ENCODE measurements at regions of chr1 and their contacts with region 1.

Region 1: GRCh38 chr1:234881893-234882771 is 246.5 kb downstream of the TOMM20 start:
- DNase-seq: peak; percentile 40
- H3K4me3 Mint-ChIP-seq: no peak overlapping the region
- H3K27ac Mint-ChIP-seq: peak overlapping the region; percentile 33
- H3K4me1 Mint-ChIP-seq: peaks cover 37% of the 10 kb centered on the region
- H3K27me3 Mint-ChIP-seq: no peaks in the 10 kb centered on the region

Region 2: DNA sequence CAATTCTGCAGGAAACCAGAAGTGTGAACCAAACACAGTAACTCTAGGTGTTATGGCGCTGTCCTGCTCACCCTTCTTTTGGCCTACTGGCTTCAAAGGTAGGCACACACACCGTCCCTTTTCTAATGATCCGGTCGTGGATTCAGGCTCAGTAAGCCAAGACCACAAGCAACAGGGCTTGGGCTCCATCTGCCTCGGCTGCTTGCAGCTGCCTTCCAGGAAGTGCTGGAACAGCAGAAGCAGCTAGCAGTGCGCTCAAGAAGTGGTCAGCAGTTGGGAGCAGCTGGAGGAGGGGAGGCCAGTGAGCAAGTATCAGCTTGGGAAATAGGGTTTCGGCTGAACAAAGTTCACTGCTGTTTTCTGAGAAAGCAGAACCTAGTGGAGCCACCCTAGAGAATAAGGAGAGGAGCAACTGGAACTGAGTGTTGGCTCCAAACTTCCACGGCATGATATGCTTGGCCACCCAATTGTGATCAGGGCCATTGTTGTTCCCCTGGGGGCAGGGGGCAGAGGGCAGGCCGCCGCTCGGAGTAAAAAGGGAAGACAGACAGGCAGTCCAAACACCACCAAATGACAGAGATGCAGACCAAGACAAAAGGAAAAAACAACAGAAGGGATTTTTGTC is 73.1 kb after region 1 on chr1:
- CTCF ChIA-PET with region 1: no interaction called
- intact Hi-C with region 1: loop called (anchors 2 kb)
- DNase-seq: no peak
- H3K4me3 Mint-ChIP-seq: no peak overlapping the region
- H3K27ac Mint-ChIP-seq: peak overlapping the region; percentile 71
- H3K4me1 Mint-ChIP-seq: peaks cover 54% of the 10 kb centered on the region
- H3K27me3 Mint-ChIP-seq: no peaks in the 10 kb centered on the region

Region 3: GRCh38 chr1:235050911-235051360 is 168.8 kb after region 1 on chr1:
- CTCF ChIA-PET with region 1: no interaction called
- intact Hi-C with region 1: no loop called
- DNase-seq: peak; percentile 37
- H3K4me3 Mint-ChIP-seq: no peak overlapping the region
- H3K27ac Mint-ChIP-seq: no peak overlapping the region
- H3K4me1 Mint-ChIP-seq: peaks cover 25% of the 10 kb centered on the region
- H3K27me3 Mint-ChIP-seq: no peaks in the 10 kb centered on the region

Measured in activated naive CD4-positive, alpha-beta T cell treated with anti-CD3 and anti-CD28 coated beads for 36 hours (primary cell).